CD4-positive, alpha-beta memory T cell (primary cell): ENCODE measurements at regions of chr2 and their contacts with region 1.

Region 1: DNA sequence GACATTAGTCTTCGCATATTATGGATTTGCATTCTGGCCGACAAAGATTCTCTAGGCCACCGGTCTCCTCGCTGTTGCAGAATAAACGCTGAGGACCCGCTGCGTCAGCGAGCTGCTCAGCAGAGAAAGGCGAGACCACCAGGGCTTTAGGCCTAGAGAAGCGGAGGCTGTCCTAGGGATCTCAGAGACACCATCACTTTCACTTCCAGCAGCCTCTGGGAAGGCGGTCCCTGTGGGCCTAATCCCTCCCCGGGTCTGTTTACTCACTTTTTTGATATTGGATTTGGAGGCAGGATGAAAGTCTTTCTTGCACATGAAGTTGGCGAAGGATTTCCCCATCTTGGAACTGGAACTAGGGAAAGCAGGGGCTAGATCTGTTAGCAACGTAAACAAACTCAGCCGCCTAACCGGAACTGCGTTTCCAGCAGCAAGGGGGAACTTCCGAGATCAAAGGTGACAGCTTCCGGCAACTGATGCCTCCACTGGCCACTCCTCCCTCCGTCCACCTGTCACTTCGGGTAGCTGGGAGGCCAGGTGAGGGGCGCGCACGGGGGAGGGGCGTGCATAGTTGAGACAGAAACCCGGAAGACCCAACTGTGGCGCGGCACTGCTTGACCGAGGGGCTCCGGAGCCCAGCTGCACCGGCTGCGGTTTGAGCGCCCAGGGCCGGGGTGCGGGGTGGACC is at the start of gene SCRN3:
- DNase-seq: peak; percentile 77 to 90 (median 83)
- H3K4me3 ChIP-seq: peak within 1 kb of the TSS; percentile 92 to 96
- H3K4me3 Mint-ChIP-seq: peak within 1 kb of the TSS; percentile 96 to 99 (median 98)
- H3K27ac ChIP-seq: peak within 1 kb of the TSS; percentile 97
- H3K27ac Mint-ChIP-seq: peak within 1 kb of the TSS; percentile 99 to 100 (median 99)
- H3K4me1 ChIP-seq: peaks cover 39% of the 10 kb centered on the region
- H3K4me1 Mint-ChIP-seq: peaks cover 32 to 64% (median 43%) of the 10 kb centered on the region in 4 donors
- H3K27me3 ChIP-seq: no peaks in the 10 kb centered on the region
- H3K27me3 Mint-ChIP-seq: no peaks in the 10 kb centered on the region
- total RNA-seq, gene SCRN3: 14.7 to 15.2 TPM

Region 2: GRCh38 chr2:173523497-173523896 is 871.9 kb before region 1 on chr2:
- CTCF ChIA-PET with region 1: no interaction called
- POLR2A ChIA-PET with region 1: no interaction called
- intact Hi-C with region 1: no loop called
- DNase-seq: no peak
- H3K4me3 ChIP-seq: no peak overlapping the region
- H3K4me3 Mint-ChIP-seq: no peak overlapping the region
- H3K27ac ChIP-seq: no peak overlapping the region
- H3K27ac Mint-ChIP-seq: no peak overlapping the region
- H3K4me1 ChIP-seq: no peaks in the 10 kb centered on the region
- H3K4me1 Mint-ChIP-seq: no peaks in the 10 kb centered on the region
- H3K27me3 ChIP-seq: no peaks in the 10 kb centered on the region
- H3K27me3 Mint-ChIP-seq: peaks cover 0 to 4% of the 10 kb centered on the region in 2 donors

Region 3: GRCh38 chr2:174248187-174248997 is 147.0 kb before region 1 on chr2 and contains the start of gene OLA1:
- CTCF ChIA-PET with region 1: no interaction called
- POLR2A ChIA-PET with region 1: interaction called, 8 read pairs
- intact Hi-C with region 1: loop called (anchors 5 kb)
- DNase-seq: peak; percentile 93 to 99 (median 95)
- H3K4me3 ChIP-seq: peak within 1 kb of the TSS; percentile 84 to 87
- H3K4me3 Mint-ChIP-seq: peak within 1 kb of the TSS; percentile 79 to 88 (median 85)
- H3K27ac ChIP-seq: peak within 1 kb of the TSS; percentile 78
- H3K27ac Mint-ChIP-seq: peak within 1 kb of the TSS; percentile 63 to 87 (median 80)
- H3K4me1 ChIP-seq: peaks cover 14% of the 10 kb centered on the region
- H3K4me1 Mint-ChIP-seq: peaks cover 11 to 32% (median 19%) of the 10 kb centered on the region in 4 donors
- H3K27me3 ChIP-seq: no peaks in the 10 kb centered on the region
- H3K27me3 Mint-ChIP-seq: no peaks in the 10 kb centered on the region
- total RNA-seq, gene OLA1: 31.1 to 31.2 TPM

Region 4: DNA sequence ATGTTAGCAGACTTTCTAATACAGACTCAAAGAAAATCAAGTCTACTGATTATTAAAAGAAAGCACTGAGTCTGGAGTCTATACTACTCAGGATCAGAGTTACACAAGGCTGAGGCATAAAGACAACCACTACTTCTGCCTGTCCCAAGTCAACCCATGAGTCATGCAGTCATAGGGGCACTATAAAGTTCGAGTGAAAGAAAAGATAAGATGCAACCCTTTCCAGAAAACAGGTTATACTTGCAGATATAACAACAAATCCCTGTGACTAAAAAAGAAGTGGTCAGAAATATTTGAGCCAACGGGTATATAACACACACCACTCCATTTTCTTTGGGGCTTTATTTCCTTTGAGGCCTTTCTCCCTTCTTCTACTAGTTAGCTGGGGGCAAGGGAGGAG is 18.5 kb before region 1 on chr2:
- CTCF ChIA-PET with region 1: no interaction called
- POLR2A ChIA-PET with region 1: no interaction called
- intact Hi-C with region 1: no loop called
- DNase-seq: no peak
- H3K4me3 ChIP-seq: no peak overlapping the region
- H3K4me3 Mint-ChIP-seq: no peak overlapping the region
- H3K27ac ChIP-seq: no peak overlapping the region
- H3K27ac Mint-ChIP-seq: no peak overlapping the region
- H3K4me1 ChIP-seq: no peaks in the 10 kb centered on the region
- H3K4me1 Mint-ChIP-seq: peaks cover 0 to 6% (median 2%) of the 10 kb centered on the region in 4 donors
- H3K27me3 ChIP-seq: no peaks in the 10 kb centered on the region
- H3K27me3 Mint-ChIP-seq: no peaks in the 10 kb centered on the region